Activated CD4-positive, alpha-beta memory T cell treated with anti-CD3 and anti-CD28 coated beads, Interleukin-2, amount 10 ng/mL, durations not matched to agents 7 days and 5 days (primary cell): ENCODE measurements at regions of chr10 and their contacts with region 1.

Region 1: DNA sequence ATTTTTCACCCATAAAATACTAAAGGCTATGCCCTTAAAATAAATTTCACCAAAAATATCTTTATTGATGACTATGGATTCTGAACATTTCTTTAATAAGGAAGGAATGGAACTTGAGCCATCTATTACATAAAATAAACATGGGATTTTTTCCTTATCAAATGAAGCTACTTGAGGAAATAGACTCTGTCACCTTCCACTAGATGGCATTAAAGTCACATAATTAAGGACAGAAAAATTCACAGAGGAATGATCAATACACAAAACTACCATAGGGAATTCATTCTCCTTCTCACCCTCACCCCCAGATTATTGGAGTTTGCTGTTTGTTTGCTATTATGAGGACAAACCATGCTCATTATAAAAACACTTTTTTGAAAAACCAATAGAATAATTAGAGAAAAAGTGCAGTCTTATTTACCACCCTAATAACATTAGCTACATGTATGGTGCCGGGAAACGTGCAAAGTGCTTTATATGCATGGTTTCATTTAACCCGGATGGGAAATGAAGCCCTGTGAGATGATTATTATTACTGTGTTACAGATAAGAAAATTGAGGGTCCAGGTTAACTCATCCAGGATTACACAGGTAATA is 21.1 kb upstream of the FOXI2 start:
- DNase-seq: no peak
- H3K4me3 Mint-ChIP-seq: no peak overlapping the region
- H3K27ac Mint-ChIP-seq: no peak overlapping the region
- H3K4me1 Mint-ChIP-seq: no peaks in the 10 kb centered on the region
- H3K27me3 Mint-ChIP-seq: no peaks in the 10 kb centered on the region

Region 2: GRCh38 chr10:127654160-127654559 is 61.7 kb before region 1 on chr10:
- CTCF ChIA-PET with region 1: no interaction called
- POLR2A ChIA-PET with region 1: no interaction called
- DNase-seq: no peak
- H3K4me3 Mint-ChIP-seq: no peak overlapping the region
- H3K27ac Mint-ChIP-seq: no peak overlapping the region
- H3K4me1 Mint-ChIP-seq: no peaks in the 10 kb centered on the region
- H3K27me3 Mint-ChIP-seq: no peaks in the 10 kb centered on the region

Region 3: GRCh38 chr10:127745861-127746260 is 30.0 kb after region 1 on chr10:
- CTCF ChIA-PET with region 1: no interaction called
- POLR2A ChIA-PET with region 1: no interaction called
- DNase-seq: no peak
- H3K4me3 Mint-ChIP-seq: no peak overlapping the region
- H3K27ac Mint-ChIP-seq: no peak overlapping the region
- H3K4me1 Mint-ChIP-seq: no peaks in the 10 kb centered on the region
- H3K27me3 Mint-ChIP-seq: no peaks in the 10 kb centered on the region

Region 4: GRCh38 chr10:127853868-127854768 is 138.2 kb after region 1 on chr10:
- CTCF ChIA-PET with region 1: interaction called, 28 read pairs
- POLR2A ChIA-PET with region 1: no interaction called
- DNase-seq: peak; percentile 45
- H3K4me3 Mint-ChIP-seq: no peak overlapping the region
- H3K27ac Mint-ChIP-seq: no peak overlapping the region
- H3K4me1 Mint-ChIP-seq: no peaks in the 10 kb centered on the region
- H3K27me3 Mint-ChIP-seq: no peaks in the 10 kb centered on the region